ENCODE measurements at regions of chr18 and their contacts with region 1.

Region 1: DNA sequence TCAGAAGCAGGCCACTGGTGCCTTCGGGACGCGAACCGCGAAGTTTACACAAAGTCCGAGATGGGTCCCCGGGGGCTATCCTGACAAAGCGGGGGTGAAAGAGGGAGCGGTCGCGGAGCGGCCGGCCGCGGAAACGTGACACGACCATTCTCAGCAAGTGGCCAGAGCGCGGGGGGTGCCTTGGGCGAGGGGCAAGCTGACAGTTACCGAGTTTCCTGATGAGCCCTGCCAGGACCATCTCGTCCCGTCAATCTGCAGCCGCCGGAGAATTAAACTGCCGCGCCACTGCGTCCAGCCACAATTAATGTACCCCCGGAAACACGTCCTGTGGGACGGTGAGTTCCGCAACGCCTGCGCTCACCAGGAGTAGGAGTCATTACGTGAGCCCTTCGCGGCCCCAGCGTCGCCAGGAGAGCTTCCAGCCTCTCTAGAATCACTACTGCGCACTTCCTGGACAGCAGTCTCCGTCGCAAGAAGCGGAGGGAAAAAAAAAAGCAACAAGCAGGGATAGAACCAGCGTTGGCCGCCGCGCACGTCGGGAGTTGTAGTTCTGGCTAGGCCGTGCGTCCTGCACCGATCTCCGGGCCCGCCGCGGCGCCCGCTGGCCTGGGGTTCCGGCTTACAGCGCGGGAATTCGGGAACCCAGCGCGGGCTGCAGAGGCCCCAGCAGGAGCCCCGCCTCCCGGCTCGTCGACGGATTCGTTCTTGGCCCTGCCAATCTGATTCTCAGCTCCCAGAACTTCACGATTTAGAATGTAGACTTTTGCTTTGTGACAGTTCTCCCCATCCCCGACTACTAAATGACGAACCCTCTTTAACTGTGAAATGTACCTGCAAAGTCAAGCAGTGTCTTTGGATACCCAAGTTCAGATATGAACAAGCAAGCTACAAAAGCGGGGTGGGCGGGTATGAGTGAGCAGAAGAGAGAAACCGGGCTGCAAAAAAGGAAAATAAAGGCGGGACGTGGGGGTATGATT is at the start of gene RTTN:
- DNase-seq: peak; percentile 87
- ATAC-seq: peak; percentile 99
- H3K4me3 ChIP-seq: peak within 1 kb of the TSS; percentile 92 to 98 (median 96)
- H3K27ac ChIP-seq: peak within 1 kb of the TSS; percentile 98
- H3K4me1 ChIP-seq: peaks cover 26% of the 10 kb centered on the region
- H3K27me3 ChIP-seq: no peaks in the 10 kb centered on the region; a peak in 1 of 5 replicates
- CTCF ChIP-seq: peak; percentile 19
- EP300 ChIP-seq: no peak
- POLR2A ChIP-seq: peak; percentile 37 to 48; a peak in 3 of 4 replicates
- RAD21 ChIP-seq: peak; percentile 10
- total RNA-seq, gene RTTN: 12.5 and 18.7 TPM in 2 replicates

Region 2: DNA sequence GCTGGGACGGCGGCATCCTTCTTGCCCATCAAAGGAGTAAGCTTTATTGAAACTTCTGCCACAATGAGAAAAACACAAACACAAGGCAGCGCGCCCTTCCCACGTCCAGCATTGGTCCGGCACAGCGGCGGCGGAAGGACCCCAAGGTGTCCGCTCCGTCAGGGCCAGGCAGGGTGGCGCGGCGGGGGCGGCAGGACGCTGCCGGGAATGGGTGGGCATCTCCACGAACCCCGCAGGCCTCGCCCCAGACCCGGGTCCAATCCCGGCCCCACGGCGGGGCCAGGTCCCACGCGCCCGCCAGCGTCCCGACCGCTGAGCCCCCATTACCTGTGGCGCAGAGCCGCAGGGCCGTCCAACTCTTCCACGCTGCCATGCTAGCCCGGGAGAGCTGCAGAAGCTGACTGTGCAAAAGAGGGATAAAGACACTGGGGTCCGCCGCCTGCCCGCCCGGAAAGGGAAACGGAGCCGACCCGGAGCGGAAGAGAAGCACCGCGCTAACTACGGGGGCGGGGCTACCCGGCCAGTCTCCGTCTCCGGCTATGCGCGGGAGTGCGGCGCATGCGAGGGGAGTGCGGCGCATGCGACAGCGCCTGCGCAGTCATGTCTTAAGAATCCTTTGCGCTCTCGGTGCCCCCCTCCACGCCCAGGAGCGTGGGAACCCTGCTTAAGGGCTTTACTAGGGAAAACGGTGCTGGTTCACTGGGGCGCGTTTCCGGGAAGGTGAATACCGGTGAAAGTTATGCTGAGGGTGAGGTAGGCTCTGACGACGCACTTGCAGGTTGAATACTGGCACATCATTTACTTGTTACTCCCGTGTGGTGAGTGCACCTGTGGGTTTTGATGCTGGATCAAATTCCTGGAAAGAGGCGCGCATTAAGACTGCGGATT is 1490.9 kb before region 1 on chr18 and contains the start of gene TMX3:
- CTCF ChIA-PET with region 1: no interaction called
- POLR2A ChIA-PET with region 1: no interaction called
- in situ Hi-C with region 1: no loop called
- intact Hi-C with region 1: loop called (anchors 10 kb)
- DNase-seq: peak; percentile 89
- ATAC-seq: peak; percentile 99
- H3K4me3 ChIP-seq: peak within 1 kb of the TSS; percentile 84 to 96 (median 94)
- H3K27ac ChIP-seq: peak within 1 kb of the TSS; percentile 80
- H3K4me1 ChIP-seq: peaks cover 26% of the 10 kb centered on the region
- H3K27me3 ChIP-seq: no peaks in the 10 kb centered on the region; a peak in 1 of 5 replicates
- CTCF ChIP-seq: peak; percentile 6; the same call in 1 of the 2 replicates
- EP300 ChIP-seq: no peak
- POLR2A ChIP-seq: peak; percentile 43 to 59; a peak in 3 of 4 replicates
- RAD21 ChIP-seq: 0 out of 2 replicates have a peak, but pooled peaks have one; percentile 9
- total RNA-seq, gene TMX3: 11.6 and 25.0 TPM in 2 replicates

Region 3: DNA sequence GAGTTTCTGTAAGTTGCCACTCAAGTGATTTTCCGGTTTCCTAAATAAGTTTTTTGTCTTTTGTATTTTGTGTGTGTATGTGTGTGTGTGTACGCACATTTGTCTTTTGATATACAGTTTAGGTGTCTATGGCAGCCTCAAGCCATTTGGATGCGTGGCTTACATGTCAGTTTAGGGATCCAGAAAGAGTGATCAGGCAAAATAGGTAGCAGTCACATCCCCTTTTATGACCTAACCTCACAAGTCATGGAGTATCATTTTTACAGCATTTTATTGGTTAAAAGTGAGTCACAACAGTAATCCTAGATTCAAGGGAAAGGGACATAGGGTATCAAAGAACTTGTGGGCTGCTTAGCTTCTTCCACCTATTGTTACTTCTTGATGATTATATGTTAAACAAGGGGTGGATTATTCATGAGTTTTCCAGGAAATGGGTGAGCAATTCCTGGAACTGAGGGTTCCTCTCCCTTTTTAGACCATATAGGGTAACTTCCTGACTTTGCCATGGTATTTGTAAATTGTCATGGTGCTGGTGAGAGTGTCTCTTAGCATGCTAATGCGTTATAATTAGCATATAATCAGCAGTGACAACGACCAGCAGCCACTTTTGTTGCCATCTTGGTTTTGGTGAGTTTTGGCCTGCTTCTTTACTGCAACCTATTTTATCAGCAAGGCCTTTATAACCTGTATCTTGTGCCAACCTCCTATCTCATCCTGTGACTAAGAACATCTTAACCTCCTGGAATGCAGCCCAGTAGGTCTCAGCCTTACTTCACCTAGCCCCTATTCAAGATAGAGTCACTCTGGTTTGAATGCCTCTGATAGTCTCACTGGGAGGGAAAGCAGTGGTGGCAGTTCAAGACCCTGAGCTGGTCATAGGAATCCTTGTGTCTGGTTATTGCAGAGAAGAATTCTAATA is 74.6 kb after region 1 on chr18:
- CTCF ChIA-PET with region 1: no interaction called
- POLR2A ChIA-PET with region 1: no interaction called
- in situ Hi-C with region 1: loop called (anchors 5 kb)
- intact Hi-C with region 1: no loop called
- DNase-seq: no peak
- ATAC-seq: no peak
- H3K4me3 ChIP-seq: no peak overlapping the region
- H3K27ac ChIP-seq: no peak overlapping the region
- H3K4me1 ChIP-seq: no peaks in the 10 kb centered on the region
- H3K27me3 ChIP-seq: peaks cover 0 to 4% of the 10 kb centered on the region in 2 experiments; a peak in 2 of 5 replicates
- CTCF ChIP-seq: no peak
- EP300 ChIP-seq: no peak
- POLR2A ChIP-seq: no peak
- RAD21 ChIP-seq: no peak

Region 4: GRCh38 chr18:70288851-70289328 is 83.2 kb after region 1 on chr18 and contains the start of gene SOCS6:
- CTCF ChIA-PET with region 1: no interaction called
- POLR2A ChIA-PET with region 1: interaction called, 3 read pairs
- in situ Hi-C with region 1: loop called (anchors 5 kb)
- intact Hi-C with region 1: loop called (anchors 1 kb)
- DNase-seq: no peak
- ATAC-seq: peak; percentile 65
- H3K4me3 ChIP-seq: peak within 1 kb of the TSS; percentile 91 to 95 (median 95)
- H3K27ac ChIP-seq: peak within 1 kb of the TSS; percentile 91
- H3K4me1 ChIP-seq: peaks cover 42% of the 10 kb centered on the region
- H3K27me3 ChIP-seq: no peaks in the 10 kb centered on the region; a peak in 1 of 5 replicates
- CTCF ChIP-seq: no peak
- EP300 ChIP-seq: no peak
- POLR2A ChIP-seq: peak in 1 of 2 experiments; percentile 50
- RAD21 ChIP-seq: peak; percentile 10; the same call in 1 of the 2 replicates
- total RNA-seq, gene SOCS6: 38.3 and 49.0 TPM in 2 replicates

Region 5: GRCh38 chr18:70337139-70337972 is 131.6 kb after region 1 on chr18:
- CTCF ChIA-PET with region 1: no interaction called
- POLR2A ChIA-PET with region 1: interaction called, 3 read pairs
- in situ Hi-C with region 1: no loop called
- intact Hi-C with region 1: loop called (anchors 2 kb)
- DNase-seq: peak; percentile 81
- ATAC-seq: peak; percentile 41
- H3K4me3 ChIP-seq: peak overlapping the region in 2 of 3 experiments; percentile 20 to 59; a peak in 3 of 6 replicates
- H3K27ac ChIP-seq: peak overlapping the region; percentile 97
- H3K4me1 ChIP-seq: peaks cover 76% of the 10 kb centered on the region
- H3K27me3 ChIP-seq: no peaks in the 10 kb centered on the region
- CTCF ChIP-seq: no peak
- EP300 ChIP-seq: peak in 1 of 2 experiments; percentile 52; a peak in 1 of 4 replicates
- POLR2A ChIP-seq: peak in 1 of 2 experiments; percentile 27; a peak in 1 of 4 replicates
- RAD21 ChIP-seq: no peak

Region 6: DNA sequence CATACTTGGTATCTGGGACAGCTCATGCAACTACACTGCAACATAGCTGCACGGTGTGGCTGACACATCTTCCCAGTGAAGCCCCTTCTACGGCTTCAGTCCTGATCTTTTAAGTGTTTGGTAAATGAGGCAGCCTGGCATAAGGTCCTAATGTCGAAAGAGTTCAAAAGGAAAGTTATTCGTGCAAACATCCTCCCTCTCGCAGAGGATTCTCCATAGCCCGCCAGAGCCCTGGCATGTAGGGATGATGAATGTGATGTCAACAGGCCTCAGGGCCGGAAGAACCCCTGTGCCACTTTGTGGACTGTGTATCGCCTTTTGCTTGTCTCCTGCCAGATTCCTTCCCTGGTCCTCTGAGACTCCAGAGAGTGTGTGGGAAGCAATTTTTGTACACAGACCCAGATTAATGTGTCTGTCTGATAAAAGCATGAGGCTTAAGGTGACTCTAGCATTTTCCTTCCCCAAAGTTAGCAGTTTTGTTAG is 171.6 kb after region 1 on chr18:
- CTCF ChIA-PET with region 1: no interaction called
- POLR2A ChIA-PET with region 1: interaction called, 6 read pairs
- in situ Hi-C with region 1: no loop called
- intact Hi-C with region 1: loop called (anchors 2 kb)
- DNase-seq: peak; percentile 93
- ATAC-seq: peak; percentile 62
- H3K4me3 ChIP-seq: peak overlapping the region; percentile 32 to 47 (median 34); a peak in 5 of 6 replicates
- H3K27ac ChIP-seq: peak overlapping the region; percentile 99
- H3K4me1 ChIP-seq: peaks cover 95% of the 10 kb centered on the region
- H3K27me3 ChIP-seq: no peaks in the 10 kb centered on the region
- CTCF ChIP-seq: no peak
- EP300 ChIP-seq: peak in 1 of 2 experiments; percentile 83; a peak in 2 of 4 replicates
- POLR2A ChIP-seq: peak in 1 of 2 experiments; percentile 28; a peak in 1 of 4 replicates
- RAD21 ChIP-seq: no peak

Region 7: DNA sequence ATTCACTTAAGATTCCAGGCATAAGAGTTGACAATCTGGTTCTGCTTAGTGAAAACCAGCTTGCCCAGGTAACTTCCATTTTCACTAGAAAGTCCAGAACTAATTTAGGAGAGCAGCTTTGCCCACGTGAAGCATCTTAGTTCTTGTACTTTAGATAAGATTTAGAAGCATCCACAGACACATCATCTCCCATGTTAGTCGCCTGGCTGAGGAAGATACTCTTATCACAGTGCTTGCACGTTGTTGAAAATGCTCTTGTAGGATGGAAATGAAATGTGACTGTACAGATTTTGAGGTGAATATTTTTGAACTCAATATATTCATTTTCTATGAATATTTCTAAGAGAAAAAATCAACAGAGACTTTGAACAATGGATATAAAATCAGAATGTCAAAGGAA is 242.9 kb after region 1 on chr18:
- CTCF ChIA-PET with region 1: no interaction called
- POLR2A ChIA-PET with region 1: no interaction called
- in situ Hi-C with region 1: loop called (anchors 5 kb)
- intact Hi-C with region 1: no loop called
- DNase-seq: no peak
- ATAC-seq: no peak
- H3K4me3 ChIP-seq: no peak overlapping the region
- H3K27ac ChIP-seq: no peak overlapping the region
- H3K4me1 ChIP-seq: peaks cover 41% of the 10 kb centered on the region
- H3K27me3 ChIP-seq: no peaks in the 10 kb centered on the region
- CTCF ChIP-seq: no peak
- EP300 ChIP-seq: no peak
- POLR2A ChIP-seq: no peak
- RAD21 ChIP-seq: no peak

Measured in HepG2 (cell line).